ENCODE measurements at regions of chr9 and their contacts with region 1.

Region 1: GRCh38 chr9:96232539-96233241 is 69.3 kb downstream of the HSD17B3 start:
- DNase-seq: peak; percentile 76
- H3K4me3 Mint-ChIP-seq: no peak overlapping the region
- H3K27ac Mint-ChIP-seq: no peak overlapping the region
- H3K4me1 Mint-ChIP-seq: peaks cover 2% of the 10 kb centered on the region
- H3K27me3 Mint-ChIP-seq: peaks cover 47% of the 10 kb centered on the region

Region 2: DNA sequence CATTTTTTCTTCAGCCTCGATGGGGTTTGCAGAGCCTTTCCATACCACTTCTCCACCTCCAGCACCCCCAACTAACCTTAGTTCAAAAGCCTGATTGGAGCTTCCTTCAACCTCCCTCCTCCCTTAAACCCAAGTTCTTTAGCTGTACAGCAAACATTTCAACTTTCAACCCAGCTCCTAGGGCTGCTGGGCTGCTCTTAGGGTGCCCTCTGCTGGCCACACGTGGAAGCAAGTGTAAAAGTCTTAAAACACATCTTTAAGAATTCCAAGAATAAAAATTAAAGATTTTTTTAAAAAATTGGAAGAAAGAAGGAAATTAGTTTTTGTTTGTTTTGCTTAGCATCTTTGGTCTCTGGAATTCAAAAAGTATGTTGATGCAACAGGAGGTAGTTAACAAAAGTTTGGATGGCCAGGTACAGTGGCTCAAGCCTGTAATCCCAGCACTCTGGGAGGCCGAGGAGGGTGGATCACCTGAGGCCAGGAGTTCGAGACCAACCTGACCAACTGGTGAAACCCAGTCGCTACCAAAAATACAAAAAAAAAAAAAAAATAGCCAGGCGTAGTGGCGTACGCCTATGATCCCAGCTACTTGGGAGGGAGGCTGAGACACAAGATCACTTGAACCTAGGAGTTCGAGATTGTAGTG is 84.8 kb after region 1 on chr9:
- intact Hi-C with region 1: loop called (anchors 1 kb)
- DNase-seq: peak; percentile 79
- H3K4me3 Mint-ChIP-seq: no peak overlapping the region
- H3K27ac Mint-ChIP-seq: no peak overlapping the region
- H3K4me1 Mint-ChIP-seq: no peaks in the 10 kb centered on the region
- H3K27me3 Mint-ChIP-seq: peaks cover 2% of the 10 kb centered on the region

Region 3: DNA sequence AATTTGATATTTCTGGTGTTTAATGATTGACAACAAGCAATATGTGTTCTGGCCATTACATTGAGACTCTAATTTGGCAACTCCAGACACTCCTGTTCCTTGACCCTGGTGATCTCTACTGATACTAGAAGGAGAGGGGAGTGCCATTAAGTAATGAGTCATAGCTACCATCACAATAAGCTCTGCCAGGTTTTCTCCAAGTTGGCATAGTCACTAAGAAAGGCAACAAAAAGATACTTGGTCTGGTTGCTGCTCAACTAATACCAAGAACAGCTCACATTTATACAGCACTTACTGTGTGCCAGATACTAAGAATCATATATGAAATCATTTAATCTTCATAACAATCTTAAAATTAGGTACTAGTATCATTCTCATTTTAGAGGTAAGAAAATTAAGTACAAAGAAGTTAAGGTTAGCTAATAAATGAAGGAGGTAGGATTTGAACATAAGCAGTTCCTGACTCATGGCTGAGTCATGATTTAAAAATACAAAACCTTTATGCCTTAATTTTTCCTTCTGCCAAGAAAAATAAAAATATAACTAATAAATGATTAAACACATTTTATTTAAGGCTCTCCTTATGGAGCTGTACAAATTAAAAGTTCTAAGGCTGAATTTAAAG is 442.3 kb after region 1 on chr9:
- intact Hi-C with region 1: no loop called
- DNase-seq: no peak
- H3K4me3 Mint-ChIP-seq: no peak overlapping the region
- H3K27ac Mint-ChIP-seq: no peak overlapping the region
- H3K4me1 Mint-ChIP-seq: no peaks in the 10 kb centered on the region
- H3K27me3 Mint-ChIP-seq: no peaks in the 10 kb centered on the region

Measured in activated CD4-positive, alpha-beta T cell treated with anti-CD3 and anti-CD28 coated beads, Interleukin-2, amount 10 ng/mL, durations not matched to agents 24 days and 14 days (primary cell).